Natural killer cell (primary cell): ENCODE measurements at regions of chr16 and their contacts with region 1.

Region 1: GRCh38 chr16:1723450-1724147 is 17.6 kb downstream of the MAPK8IP3 start:
- DNase-seq: peak in 1 of 2 donors; percentile 73
- ATAC-seq: peak; percentile 46 to 60 (median 51)
- H3K4me3 ChIP-seq: no peak overlapping the region
- H3K4me3 Mint-ChIP-seq: peak overlapping the region; percentile 80
- H3K27ac ChIP-seq: peak overlapping the region; percentile 43
- H3K27ac Mint-ChIP-seq: peak overlapping the region; percentile 70 to 85
- H3K4me1 ChIP-seq: peaks cover 56% of the 10 kb centered on the region
- H3K4me1 Mint-ChIP-seq: peaks cover 38 to 41% of the 10 kb centered on the region in 2 donors
- H3K27me3 ChIP-seq: no peaks in the 10 kb centered on the region
- H3K27me3 Mint-ChIP-seq: no peaks in the 10 kb centered on the region
- CTCF ChIP-seq: peak; percentile 81

Region 2: DNA sequence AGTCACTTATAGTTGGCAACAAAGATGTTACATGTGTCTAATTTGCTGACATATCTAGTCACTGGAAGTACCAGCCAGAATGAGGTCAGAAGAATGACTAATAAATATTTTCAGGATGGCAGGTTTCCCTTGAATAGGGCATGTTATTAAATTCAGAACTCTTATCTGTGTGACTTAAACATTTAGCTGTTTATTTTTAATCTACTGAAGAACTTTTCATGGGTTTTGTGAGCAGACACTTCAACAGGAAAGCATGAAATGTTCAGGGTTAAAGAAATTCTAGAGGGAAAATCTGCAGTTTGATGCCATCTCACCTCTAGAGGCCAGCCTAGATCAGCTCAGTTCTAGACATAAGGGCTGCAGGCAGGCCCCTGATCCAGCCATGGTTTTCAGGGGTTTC is 32.3 kb before region 1 on chr16:
- intact Hi-C with region 1: no loop called
- DNase-seq: no peak
- ATAC-seq: no peak
- H3K4me3 ChIP-seq: no peak overlapping the region
- H3K4me3 Mint-ChIP-seq: no peak overlapping the region
- H3K27ac ChIP-seq: no peak overlapping the region
- H3K27ac Mint-ChIP-seq: no peak overlapping the region
- H3K4me1 ChIP-seq: no peaks in the 10 kb centered on the region
- H3K4me1 Mint-ChIP-seq: no peaks in the 10 kb centered on the region
- H3K27me3 ChIP-seq: no peaks in the 10 kb centered on the region
- H3K27me3 Mint-ChIP-seq: no peaks in the 10 kb centered on the region
- CTCF ChIP-seq: no peak

Region 3: DNA sequence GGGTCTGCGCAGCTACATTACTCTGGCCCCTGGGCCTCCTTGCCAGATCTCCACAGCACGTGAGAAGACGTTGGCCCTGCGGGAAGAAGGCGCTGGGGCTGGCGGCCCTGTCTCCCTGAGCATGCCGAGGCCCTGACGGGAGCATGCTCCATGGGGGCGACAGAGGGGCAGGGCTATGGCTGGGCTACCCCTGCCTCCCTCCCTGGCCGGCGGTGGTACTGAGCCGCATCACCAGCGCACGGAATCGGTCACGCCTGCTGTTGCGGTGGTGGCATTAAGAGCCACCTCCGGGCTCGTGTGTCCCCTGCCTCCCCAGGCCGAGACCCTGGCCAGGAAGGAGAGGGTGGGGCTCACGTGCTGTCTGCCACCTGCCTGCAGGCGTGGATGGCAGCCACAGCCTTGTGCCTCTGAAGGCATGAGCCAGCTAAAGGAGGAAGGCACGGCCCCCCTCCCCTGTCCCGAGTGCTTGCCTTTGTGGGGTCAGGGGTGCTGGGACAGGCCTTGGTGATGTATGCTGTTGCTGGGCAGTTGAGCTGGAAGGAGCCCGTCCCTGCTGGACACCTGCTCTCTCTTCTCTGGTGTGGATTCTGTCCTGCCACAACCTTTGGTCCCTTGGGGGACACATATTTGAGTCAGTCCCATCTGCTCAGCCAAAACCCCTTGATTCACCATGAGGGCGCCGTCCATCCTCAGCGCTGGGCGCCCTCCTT is 10.7 kb after region 1 on chr16:
- intact Hi-C with region 1: loop called (anchors 1 kb)
- DNase-seq: no peak
- ATAC-seq: no peak
- H3K4me3 ChIP-seq: no peak overlapping the region
- H3K4me3 Mint-ChIP-seq: no peak overlapping the region
- H3K27ac ChIP-seq: no peak overlapping the region
- H3K27ac Mint-ChIP-seq: no peak overlapping the region
- H3K4me1 ChIP-seq: no peaks in the 10 kb centered on the region
- H3K4me1 Mint-ChIP-seq: peaks cover 0 to 4% of the 10 kb centered on the region in 2 donors
- H3K27me3 ChIP-seq: no peaks in the 10 kb centered on the region
- H3K27me3 Mint-ChIP-seq: no peaks in the 10 kb centered on the region
- CTCF ChIP-seq: no peak

Region 4: GRCh38 chr16:1890708-1891050 is 167.1 kb after region 1 on chr16:
- intact Hi-C with region 1: no loop called
- DNase-seq: no peak
- ATAC-seq: no peak
- H3K4me3 ChIP-seq: no peak overlapping the region
- H3K4me3 Mint-ChIP-seq: no peak overlapping the region
- H3K27ac ChIP-seq: no peak overlapping the region
- H3K27ac Mint-ChIP-seq: no peak overlapping the region
- H3K4me1 ChIP-seq: no peaks in the 10 kb centered on the region
- H3K4me1 Mint-ChIP-seq: no peaks in the 10 kb centered on the region
- H3K27me3 ChIP-seq: no peaks in the 10 kb centered on the region
- H3K27me3 Mint-ChIP-seq: peaks cover 12 to 15% of the 10 kb centered on the region in 2 donors
- CTCF ChIP-seq: no peak